Activated CD4-positive, alpha-beta memory T cell treated with anti-CD3 and anti-CD28 coated beads for 36 hours (primary cell): ENCODE measurements at regions of chr19 and their contacts with region 1.

Region 1: DNA sequence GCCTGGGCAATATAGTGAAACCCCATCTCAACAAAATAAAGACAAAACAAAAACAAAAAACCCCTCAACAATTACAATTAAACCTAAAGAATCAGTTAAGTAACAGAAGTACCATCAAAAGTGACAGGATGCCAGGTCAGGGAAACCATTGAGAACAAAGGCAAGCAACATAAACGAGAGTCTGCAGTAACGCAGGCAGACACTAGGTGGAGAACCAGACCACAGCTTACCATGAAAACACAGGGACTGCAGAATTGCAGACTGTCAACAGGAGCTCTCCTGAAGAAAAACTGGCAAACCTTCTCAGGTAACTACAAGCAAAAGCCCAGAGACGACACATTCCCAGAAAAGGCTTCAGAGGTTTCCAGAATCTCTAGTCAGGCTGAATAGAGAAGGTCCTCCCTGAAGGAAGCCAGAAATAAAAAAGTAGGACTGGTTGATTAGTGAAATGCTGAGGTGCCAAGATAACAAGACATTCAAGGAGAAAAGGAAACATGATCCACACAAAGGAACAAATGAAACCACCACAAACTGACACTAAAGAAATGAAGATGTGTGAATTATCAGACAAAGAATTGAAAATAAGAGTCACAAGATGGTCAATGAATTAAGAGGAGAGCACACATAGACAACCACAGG is 2.2 kb upstream of the ZNF665 start:
- DNase-seq: peak; percentile 85
- H3K4me3 Mint-ChIP-seq: peak overlapping the region; percentile 21
- H3K27ac Mint-ChIP-seq: peak overlapping the region; percentile 11
- H3K4me1 Mint-ChIP-seq: peaks cover 32% of the 10 kb centered on the region
- H3K27me3 Mint-ChIP-seq: no peaks in the 10 kb centered on the region

Region 2: GRCh38 chr19:52987221-52987620 is 208.2 kb before region 1 on chr19:
- CTCF ChIA-PET with region 1: no interaction called
- POLR2A ChIA-PET with region 1: no interaction called
- intact Hi-C with region 1: no loop called
- DNase-seq: no peak
- H3K4me3 Mint-ChIP-seq: no peak overlapping the region
- H3K27ac Mint-ChIP-seq: no peak overlapping the region
- H3K4me1 Mint-ChIP-seq: peaks cover 4% of the 10 kb centered on the region
- H3K27me3 Mint-ChIP-seq: no peaks in the 10 kb centered on the region

Region 3: DNA sequence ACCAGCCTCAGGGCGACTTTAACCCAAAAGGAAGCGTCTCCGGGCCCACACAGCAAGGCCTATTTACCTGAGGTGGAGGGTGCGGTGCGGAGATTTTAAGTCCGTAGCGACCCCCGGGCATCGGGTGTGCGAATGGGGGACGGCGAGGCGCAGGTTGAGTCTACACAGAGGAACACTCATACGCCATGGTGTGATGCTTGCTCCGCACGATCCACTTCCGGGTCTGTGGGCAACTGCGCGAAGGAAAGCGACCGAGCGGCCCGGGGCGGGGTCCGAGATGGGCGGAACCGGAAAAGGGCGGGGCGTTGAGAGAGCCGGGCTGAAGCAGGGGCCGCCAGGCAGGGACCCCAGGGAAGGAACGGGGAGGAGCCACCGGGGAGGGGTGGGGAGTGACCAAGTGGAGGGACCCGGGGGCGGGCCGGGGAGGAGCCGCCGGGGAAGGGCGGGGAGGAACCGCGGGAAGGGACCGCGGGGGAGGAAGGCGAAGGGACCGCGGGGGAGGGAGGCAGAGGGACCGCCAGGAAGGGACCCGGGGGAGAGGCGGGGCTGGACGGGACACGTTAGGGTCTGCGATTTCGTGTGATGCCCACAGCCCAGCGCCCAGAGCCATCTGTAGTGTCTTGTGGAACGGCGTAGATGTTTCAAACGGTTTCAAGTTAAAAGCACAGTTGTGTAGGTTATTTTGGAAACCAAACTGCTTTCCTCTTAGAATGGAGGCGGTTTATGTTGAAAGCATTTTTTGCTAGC is 92.0 kb before region 1 on chr19 and contains the start of gene ZNF160:
- CTCF ChIA-PET with region 1: no interaction called
- POLR2A ChIA-PET with region 1: no interaction called
- intact Hi-C with region 1: loop called (anchors 5 kb)
- DNase-seq: peak; percentile 99
- H3K4me3 Mint-ChIP-seq: peak within 1 kb of the TSS; percentile 89
- H3K27ac Mint-ChIP-seq: peak within 1 kb of the TSS; percentile 81
- H3K4me1 Mint-ChIP-seq: peaks cover 28% of the 10 kb centered on the region
- H3K27me3 Mint-ChIP-seq: peaks cover 2% of the 10 kb centered on the region
- total RNA-seq, gene ZNF160: 26.3 to 28.9 TPM

Region 4: DNA sequence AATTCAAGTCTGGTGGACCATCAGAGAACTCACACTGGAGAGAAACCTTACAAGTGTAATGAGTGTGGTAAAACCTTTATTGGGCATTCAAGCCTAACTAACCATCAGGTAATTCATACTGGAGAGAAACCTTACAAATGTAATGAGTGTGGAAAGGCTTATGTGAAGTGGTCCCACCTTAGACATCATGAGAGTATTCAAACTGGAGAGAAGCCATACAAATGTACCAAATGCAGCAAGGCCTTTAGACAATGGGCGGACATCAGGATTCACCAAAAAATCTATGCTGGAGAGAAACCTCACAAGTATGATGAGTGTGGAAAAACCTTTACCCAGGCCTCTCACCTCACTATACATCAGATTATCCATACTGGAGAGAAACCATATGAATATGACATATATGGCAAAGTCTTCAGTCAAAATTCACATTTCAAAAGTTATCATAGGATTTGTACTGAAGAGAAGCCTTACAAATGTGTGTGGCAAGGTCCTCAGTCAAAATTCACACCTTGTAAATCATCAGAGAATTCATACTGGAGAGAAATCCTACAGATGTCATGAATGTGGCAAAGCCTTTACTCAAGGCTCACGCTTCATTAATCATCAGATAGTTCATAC is 17.4 kb after region 1 on chr19:
- CTCF ChIA-PET with region 1: no interaction called
- POLR2A ChIA-PET with region 1: no interaction called
- intact Hi-C with region 1: no loop called
- DNase-seq: no peak
- H3K4me3 Mint-ChIP-seq: no peak overlapping the region
- H3K27ac Mint-ChIP-seq: no peak overlapping the region
- H3K4me1 Mint-ChIP-seq: no peaks in the 10 kb centered on the region
- H3K27me3 Mint-ChIP-seq: no peaks in the 10 kb centered on the region

Region 5: GRCh38 chr19:53254411-53255341 is 59.3 kb after region 1 on chr19 and contains the start of gene ZNF677:
- CTCF ChIA-PET with region 1: no interaction called
- POLR2A ChIA-PET with region 1: no interaction called
- intact Hi-C with region 1: loop called (anchors 5 kb)
- DNase-seq: peak; percentile 90
- H3K4me3 Mint-ChIP-seq: peak within 1 kb of the TSS; percentile 78
- H3K27ac Mint-ChIP-seq: no peak within 1 kb of the TSS
- H3K4me1 Mint-ChIP-seq: peaks cover 10% of the 10 kb centered on the region
- H3K27me3 Mint-ChIP-seq: no peaks in the 10 kb centered on the region
- total RNA-seq, gene ZNF677: 4.6 to 4.9 TPM

Region 6: GRCh38 chr19:53365134-53365898 is 169.9 kb after region 1 on chr19 and contains the start of gene ZNF525:
- CTCF ChIA-PET with region 1: interaction called, 7 read pairs
- POLR2A ChIA-PET with region 1: no interaction called
- intact Hi-C with region 1: loop called (anchors 1 kb)
- DNase-seq: peak; percentile 98
- H3K4me3 Mint-ChIP-seq: peak within 1 kb of the TSS; percentile 88
- H3K27ac Mint-ChIP-seq: peak within 1 kb of the TSS; percentile 87
- H3K4me1 Mint-ChIP-seq: peaks cover 22% of the 10 kb centered on the region
- H3K27me3 Mint-ChIP-seq: no peaks in the 10 kb centered on the region
- total RNA-seq, gene ZNF525: 14.5 to 19.9 TPM

Region 7: GRCh38 chr19:53431399-53432087 is 236.2 kb after region 1 on chr19 and contains the start of gene ZNF761:
- CTCF ChIA-PET with region 1: no interaction called
- POLR2A ChIA-PET with region 1: no interaction called
- intact Hi-C with region 1: loop called (anchors 5 kb)
- DNase-seq: peak; percentile 98
- H3K4me3 Mint-ChIP-seq: peak within 1 kb of the TSS; percentile 84
- H3K27ac Mint-ChIP-seq: peak within 1 kb of the TSS; percentile 88
- H3K4me1 Mint-ChIP-seq: peaks cover 22% of the 10 kb centered on the region
- H3K27me3 Mint-ChIP-seq: no peaks in the 10 kb centered on the region
- total RNA-seq, gene ZNF761: 10.6 to 11.3 TPM

Region 8: GRCh38 chr19:53792721-53793433 is 597.5 kb after region 1 on chr19:
- CTCF ChIA-PET with region 1: no interaction called
- POLR2A ChIA-PET with region 1: no interaction called
- intact Hi-C with region 1: loop called (anchors 1 kb)
- DNase-seq: peak; percentile 84
- H3K4me3 Mint-ChIP-seq: no peak overlapping the region
- H3K27ac Mint-ChIP-seq: no peak overlapping the region
- H3K4me1 Mint-ChIP-seq: no peaks in the 10 kb centered on the region
- H3K27me3 Mint-ChIP-seq: no peaks in the 10 kb centered on the region